BJ (cell line): ENCODE measurements at regions of chr13 and their contacts with region 1.

Region 1: GRCh38 chr13:108425056-108425455 is 155.5 kb downstream of the TNFSF13B start:
- DNase-seq: no peak
- H3K4me3 ChIP-seq: no peak overlapping the region
- H3K27me3 ChIP-seq: no peaks in the 10 kb centered on the region
- CTCF ChIP-seq: no peak

Region 2: DNA sequence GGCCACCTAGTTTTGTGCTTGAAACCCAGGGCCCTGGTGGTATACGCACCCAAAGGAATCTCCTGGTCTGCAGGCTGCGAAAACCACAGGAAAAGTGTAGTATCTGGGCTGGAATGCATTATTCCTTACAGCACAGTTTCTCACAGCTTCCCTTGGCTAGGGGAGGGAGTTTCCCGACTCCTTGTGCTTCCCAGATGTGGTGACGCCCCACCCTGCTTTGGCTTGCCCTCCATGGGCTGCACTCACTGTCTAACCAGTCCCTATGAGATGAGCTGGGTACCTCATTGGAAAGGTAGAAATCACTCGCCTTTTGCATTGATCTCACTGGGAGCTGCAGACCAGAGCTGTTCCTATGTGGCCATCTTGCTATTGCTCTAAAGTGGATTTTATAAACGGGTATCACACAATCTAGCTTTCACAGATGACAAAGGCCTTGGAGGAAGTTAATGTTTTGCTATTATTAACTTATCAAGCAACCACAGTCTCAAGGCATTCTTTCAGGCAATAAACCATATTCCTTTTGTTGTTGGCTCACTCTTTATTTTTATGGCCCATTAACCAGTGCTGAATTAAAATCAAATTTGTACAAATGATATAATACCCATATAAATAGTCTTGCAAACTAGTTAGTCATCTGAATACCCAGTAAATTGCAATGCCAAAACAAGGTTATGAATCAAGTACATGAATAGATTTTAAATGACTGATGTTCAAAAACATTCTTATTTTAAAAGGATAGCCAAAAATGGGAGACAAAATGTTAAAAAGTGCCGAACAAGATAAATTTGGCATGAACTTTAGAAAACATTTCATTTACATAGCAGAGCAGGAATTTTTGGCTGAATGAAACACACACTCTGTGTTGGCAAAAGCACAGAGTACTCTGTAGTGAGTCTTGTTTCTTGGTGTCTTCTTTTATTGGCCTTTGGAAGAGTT is 1381.8 kb before region 1 on chr13:
- CTCF ChIA-PET with region 1: no interaction called
- POLR2A ChIA-PET with region 1: interaction called, 16 read pairs
- DNase-seq: peak; percentile 68
- H3K4me3 ChIP-seq: no peak overlapping the region
- H3K27me3 ChIP-seq: no peaks in the 10 kb centered on the region
- CTCF ChIP-seq: no peak

Region 3: DNA sequence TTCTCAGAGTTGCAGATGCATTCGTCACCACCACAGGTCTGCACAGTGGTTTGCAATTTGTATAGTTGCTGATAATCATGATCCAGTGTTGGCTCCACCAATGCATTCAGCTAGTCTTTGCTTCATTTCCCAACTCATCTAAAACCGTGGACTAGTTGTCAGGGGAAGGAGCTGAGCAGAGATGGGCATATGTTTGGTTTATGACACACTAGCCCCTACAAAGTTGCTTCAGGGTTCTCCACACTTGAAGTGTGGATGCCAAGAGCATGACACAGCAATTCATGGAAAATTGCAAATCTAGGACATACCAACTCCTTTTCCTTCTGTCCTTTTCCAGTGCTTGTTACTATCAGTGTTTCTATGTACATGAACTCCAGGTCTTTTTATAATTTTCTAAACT is 12.4 kb after region 1 on chr13:
- CTCF ChIA-PET with region 1: no interaction called
- POLR2A ChIA-PET with region 1: no interaction called
- DNase-seq: no peak
- H3K4me3 ChIP-seq: no peak overlapping the region
- H3K27me3 ChIP-seq: no peaks in the 10 kb centered on the region
- CTCF ChIP-seq: no peak